ENCODE measurements at regions of chr5 and their contacts with region 1.

Region 1: DNA sequence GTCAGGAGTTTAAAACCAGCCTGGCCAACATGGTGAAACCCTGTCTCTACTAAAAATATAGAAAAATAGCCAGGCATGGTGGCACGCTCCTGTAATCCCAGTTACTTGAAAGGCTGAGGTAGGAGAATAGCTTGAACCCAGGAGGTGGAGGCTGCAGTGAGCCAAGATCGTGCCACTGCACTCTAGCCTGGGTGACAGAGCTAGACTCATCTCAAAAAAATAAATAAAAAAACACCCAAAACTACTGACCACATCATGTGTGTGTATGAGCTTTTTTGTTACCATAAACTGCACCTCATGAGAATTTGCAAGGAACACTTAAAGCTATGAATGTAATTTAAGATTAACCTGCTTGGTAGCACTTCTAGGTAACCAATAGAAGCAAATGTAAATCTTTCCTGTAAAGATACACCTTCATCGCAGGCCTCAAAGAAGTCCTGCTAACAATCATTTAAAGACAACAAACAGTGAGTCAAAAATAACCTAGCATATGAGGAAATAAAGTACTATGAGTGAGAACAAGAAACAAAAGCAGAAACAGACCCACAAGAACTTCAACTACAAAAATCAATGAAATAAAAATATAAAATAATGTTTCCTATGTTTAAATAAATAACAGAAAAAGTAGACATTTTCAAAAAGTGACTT is 13.0 kb downstream of the SLC38A9 start:
- DNase-seq: no peak
- ATAC-seq: no peak
- H3K4me3 ChIP-seq: no peak overlapping the region
- H3K27ac ChIP-seq: no peak overlapping the region
- H3K4me1 ChIP-seq: peaks cover 0 to 7% (median 0%) of the 10 kb centered on the region in 12 donors
- H3K27me3 ChIP-seq: no peaks in the 10 kb centered on the region
- CTCF ChIP-seq: no peak
- POLR2A ChIP-seq: no peak

Region 2: GRCh38 chr5:55324815-55325418 is 374.2 kb before region 1 on chr5:
- intact Hi-C with region 1: loop called in 2 of 10 experiments (anchors 2 to 5 kb)
- DNase-seq: no peak
- ATAC-seq: peak in 1 of 4 donors; percentile 24
- H3K4me3 ChIP-seq: no peak overlapping the region
- H3K27ac ChIP-seq: no peak overlapping the region
- H3K4me1 ChIP-seq: peaks cover 0 to 9% (median 7%) of the 10 kb centered on the region in 12 donors
- H3K27me3 ChIP-seq: no peaks in the 10 kb centered on the region
- CTCF ChIP-seq: peak; percentile 38 to 66 (median 52)
- POLR2A ChIP-seq: no peak